OCI-LY7 (cell line): ENCODE measurements at regions of chr1 and their contacts with region 1.

Region 1: DNA sequence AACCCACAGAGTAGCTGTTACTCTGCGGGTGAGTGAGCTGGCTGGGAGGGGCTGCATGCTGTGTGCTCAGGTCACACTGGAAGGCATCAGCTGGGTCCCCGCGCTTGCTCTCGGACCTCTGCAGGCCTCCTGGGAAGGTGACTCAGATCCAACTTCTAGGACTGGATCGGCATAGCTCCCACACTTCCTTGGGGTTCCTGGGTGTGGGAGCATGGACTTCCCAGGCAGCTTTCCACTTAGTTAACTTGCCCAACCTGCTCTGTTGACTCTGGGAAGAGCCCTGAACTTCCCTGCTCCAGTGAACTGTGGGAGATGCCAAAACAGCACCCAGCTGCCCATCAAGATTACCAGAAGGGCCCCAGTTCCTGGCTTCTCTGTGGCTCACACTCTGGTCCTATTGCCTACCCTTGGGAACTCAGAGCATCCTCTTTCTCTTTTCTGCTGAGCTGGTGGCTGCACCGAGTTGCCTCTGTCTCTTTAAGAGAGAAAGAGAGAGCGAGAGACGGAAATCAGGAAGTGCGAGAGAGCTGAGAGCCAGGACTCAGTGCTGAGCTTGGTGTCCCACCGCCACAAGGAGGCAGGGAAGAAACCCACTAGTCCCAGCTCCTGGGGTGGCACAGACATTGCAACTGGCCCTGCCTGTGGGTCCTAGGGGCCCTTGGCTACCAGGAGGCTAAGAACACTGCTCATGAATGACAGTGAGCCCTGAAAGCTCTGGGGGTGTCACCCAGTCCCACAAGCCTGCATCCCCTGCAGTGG is at the start of gene IKBKE:
- DNase-seq: peak; percentile 89
- H3K4me3 ChIP-seq: peak within 1 kb of the TSS; percentile 82
- H3K27ac ChIP-seq: peak within 1 kb of the TSS; percentile 68
- H3K4me1 ChIP-seq: peaks cover 57% of the 10 kb centered on the region
- CTCF ChIP-seq: peak; percentile 52
- total RNA-seq, gene IKBKE: 23.8 and 23.9 TPM in 2 replicates

Region 2: GRCh38 chr1:205668951-205669340 is 801.2 kb before region 1 on chr1:
- CTCF ChIA-PET with region 1: no interaction called
- POLR2A ChIA-PET with region 1: no interaction called
- intact Hi-C with region 1: loop called (anchors 5 kb)
- DNase-seq: peak; percentile 61
- H3K4me3 ChIP-seq: peak overlapping the region; percentile 55
- H3K27ac ChIP-seq: peak overlapping the region; percentile 35
- H3K4me1 ChIP-seq: peaks cover 87% of the 10 kb centered on the region
- CTCF ChIP-seq: peak; percentile 47; the same call in 1 of the 2 replicates

Region 3: DNA sequence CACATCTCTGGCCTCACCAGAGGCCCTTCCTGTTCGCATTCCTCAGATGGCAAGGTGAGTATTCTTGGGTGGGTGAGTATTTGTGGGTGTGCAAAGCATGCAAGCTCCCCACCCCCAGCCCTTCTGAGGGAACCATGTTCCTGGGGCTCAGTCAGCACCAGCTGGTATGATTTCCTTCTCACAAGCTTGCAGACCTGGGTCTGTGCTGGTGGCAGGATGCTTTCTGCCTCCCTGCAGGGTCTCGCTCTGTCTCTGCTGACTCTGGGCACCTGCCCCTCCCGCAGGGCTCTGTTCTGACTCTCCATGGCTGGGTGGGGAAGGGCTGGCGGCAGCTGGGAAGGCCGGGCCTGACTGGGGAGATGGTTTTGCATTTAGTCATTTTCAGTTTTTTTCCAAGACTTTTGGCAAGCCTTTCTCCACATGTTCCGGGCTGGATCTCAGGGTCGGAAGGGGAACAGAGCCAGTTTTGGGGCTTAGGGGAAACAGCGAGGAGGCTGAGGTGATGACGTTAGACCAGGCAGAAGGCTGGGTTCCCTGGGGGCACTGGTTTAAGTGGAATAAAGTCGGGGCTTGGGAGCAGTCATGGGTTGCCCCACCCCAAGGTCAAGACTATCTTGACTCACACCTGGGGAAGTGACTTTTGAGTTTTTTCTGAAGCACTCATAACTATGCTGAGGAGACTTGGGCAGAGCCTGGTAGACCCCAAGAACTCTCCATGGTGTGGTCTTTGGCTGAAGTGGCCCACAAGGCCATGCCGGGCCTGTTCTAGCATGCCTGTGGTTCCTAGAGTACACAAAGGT is 43.4 kb after region 1 on chr1:
- CTCF ChIA-PET with region 1: no interaction called
- POLR2A ChIA-PET with region 1: no interaction called
- intact Hi-C with region 1: no loop called
- DNase-seq: no peak
- H3K4me3 ChIP-seq: no peak overlapping the region
- H3K27ac ChIP-seq: no peak overlapping the region
- H3K4me1 ChIP-seq: no peaks in the 10 kb centered on the region
- CTCF ChIP-seq: no peak

Region 4: GRCh38 chr1:206556750-206557635 is 86.9 kb after region 1 on chr1:
- CTCF ChIA-PET with region 1: interaction called, 20 read pairs
- POLR2A ChIA-PET with region 1: interaction called, 3 read pairs
- intact Hi-C with region 1: no loop called
- DNase-seq: peak; percentile 88
- H3K4me3 ChIP-seq: peak overlapping the region; percentile 92
- H3K27ac ChIP-seq: peak overlapping the region; percentile 72
- H3K4me1 ChIP-seq: peaks cover 57% of the 10 kb centered on the region
- CTCF ChIP-seq: peak; percentile 34; the same call in 1 of the 2 replicates